ENCODE measurements at regions of chr6 and their contacts with region 1.

Region 1: GRCh38 chr6:159693128-159693893 is at the start of gene SOD2:
- DNase-seq: peak; percentile 81
- H3K4me3 ChIP-seq: peak within 1 kb of the TSS; percentile 67 to 91 (median 82)
- H3K27ac ChIP-seq: peak within 1 kb of the TSS; percentile 58
- H3K4me1 ChIP-seq: peaks cover 25% of the 10 kb centered on the region
- H3K27me3 ChIP-seq: no peaks in the 10 kb centered on the region
- CTCF ChIP-seq: no peak
- total RNA-seq, gene SOD2: 105 to 145 TPM

Region 2: GRCh38 chr6:158344534-158344933 is 1348.8 kb before region 1 on chr6:
- CTCF ChIA-PET with region 1: no interaction called
- dilution Hi-C with region 1: no loop called
- in situ Hi-C with region 1: no loop called
- intact Hi-C with region 1: no loop called
- DNase-seq: no peak
- H3K4me3 ChIP-seq: no peak overlapping the region
- H3K27ac ChIP-seq: no peak overlapping the region
- H3K4me1 ChIP-seq: no peaks in the 10 kb centered on the region
- H3K27me3 ChIP-seq: no peaks in the 10 kb centered on the region
- CTCF ChIP-seq: no peak

Region 3: GRCh38 chr6:159505140-159505922 is 188.0 kb before region 1 on chr6:
- CTCF ChIA-PET with region 1: no interaction called
- dilution Hi-C with region 1: no loop called
- in situ Hi-C with region 1: no loop called
- intact Hi-C with region 1: no loop called
- DNase-seq: no peak
- H3K4me3 ChIP-seq: no peak overlapping the region
- H3K27ac ChIP-seq: no peak overlapping the region
- H3K4me1 ChIP-seq: no peaks in the 10 kb centered on the region
- H3K27me3 ChIP-seq: no peaks in the 10 kb centered on the region
- CTCF ChIP-seq: no peak

Region 4: DNA sequence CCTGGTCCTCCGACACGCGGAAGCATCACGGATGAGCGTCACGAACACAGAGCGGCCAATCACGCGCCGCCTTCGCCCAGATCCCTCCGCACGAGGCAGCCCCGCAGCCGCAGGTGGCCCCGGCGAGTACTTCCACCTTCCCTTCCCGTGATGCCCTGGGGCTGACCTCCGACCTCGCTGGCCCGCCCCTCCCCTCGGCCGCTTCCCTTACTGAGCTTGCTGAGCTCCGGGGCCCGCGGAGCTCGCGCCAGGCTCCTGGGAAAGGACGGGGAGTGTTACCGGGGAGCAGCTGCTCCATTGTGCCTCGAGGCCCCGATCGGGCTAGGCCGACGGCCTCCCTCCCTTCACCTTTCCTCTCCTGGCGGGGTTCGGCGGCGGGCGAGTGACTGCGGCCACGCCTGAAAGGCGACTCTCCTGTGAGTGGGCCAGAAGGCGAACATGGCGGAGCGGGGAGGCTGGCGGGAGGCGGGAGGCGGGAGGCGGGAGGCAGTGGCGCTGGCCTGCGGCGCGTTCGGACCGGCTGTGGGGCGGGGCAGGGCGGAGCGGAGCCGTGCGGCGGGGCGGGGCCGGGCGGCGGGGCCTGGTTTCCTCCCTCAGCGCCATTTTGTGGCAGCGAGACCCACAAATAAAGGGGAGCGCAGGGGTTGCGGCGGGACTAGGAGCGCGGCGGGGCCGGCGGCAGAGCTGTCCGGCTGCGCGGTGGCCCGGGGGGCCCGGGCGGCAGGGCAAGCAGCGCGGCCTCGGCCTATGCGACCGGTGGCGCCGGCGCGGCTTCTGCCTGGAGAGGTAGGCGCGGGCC is 33.8 kb after region 1 on chr6 and contains the start of gene WTAP:
- CTCF ChIA-PET with region 1: interaction called, 3 read pairs
- dilution Hi-C with region 1: no loop called
- in situ Hi-C with region 1: loop called in 1 of 2 experiments (anchors 5 kb)
- intact Hi-C with region 1: loop called (anchors 1 kb)
- DNase-seq: peak; percentile 97
- H3K4me3 ChIP-seq: peak within 1 kb of the TSS; percentile 84 to 92 (median 91)
- H3K27ac ChIP-seq: peak within 1 kb of the TSS; percentile 89
- H3K4me1 ChIP-seq: peaks cover 16% of the 10 kb centered on the region
- H3K27me3 ChIP-seq: no peaks in the 10 kb centered on the region
- CTCF ChIP-seq: no peak
- total RNA-seq, gene WTAP: 64.5 to 92.0 TPM

Region 5: DNA sequence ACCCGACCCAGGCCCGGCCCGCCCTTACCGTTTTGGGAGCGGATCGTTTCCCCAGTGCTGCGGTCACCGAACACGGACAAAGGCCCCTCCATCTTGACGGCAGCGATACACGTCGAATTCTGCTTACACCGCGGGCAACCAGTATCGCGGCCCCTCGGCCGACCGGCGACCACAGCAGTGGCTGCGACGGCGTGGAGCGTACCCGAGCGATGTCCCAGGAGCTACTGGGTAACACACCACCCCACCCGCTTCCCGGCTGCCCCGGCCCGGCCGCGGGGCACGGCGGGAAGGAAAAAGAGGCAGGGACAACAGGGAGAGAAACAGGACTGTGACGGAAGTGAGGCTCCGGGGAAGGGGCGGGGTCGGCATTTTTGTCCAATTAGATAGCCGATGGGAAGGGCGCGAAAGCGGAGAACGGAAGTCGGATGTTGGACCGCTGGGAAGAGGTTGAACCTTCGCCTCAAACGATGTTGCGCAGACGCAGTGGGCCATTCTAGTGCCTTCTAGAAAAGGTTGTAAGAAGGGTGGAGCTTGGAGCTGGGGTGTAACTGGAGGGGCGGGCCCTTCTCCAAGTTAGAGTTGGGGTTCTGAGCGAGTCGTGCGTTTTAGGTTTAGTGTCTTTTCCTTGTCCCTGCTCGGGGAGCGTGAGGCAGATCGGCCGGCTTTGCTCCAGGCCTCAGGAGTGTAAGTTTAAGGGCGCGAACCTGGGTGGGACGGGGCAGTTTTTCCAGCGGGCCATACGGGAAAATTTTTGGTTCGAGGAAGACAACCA is 96.3 kb after region 1 on chr6 and contains the start of gene TCP1:
- CTCF ChIA-PET with region 1: no interaction called
- dilution Hi-C with region 1: no loop called
- in situ Hi-C with region 1: no loop called
- intact Hi-C with region 1: loop called (anchors 1 kb)
- DNase-seq: peak; percentile 99
- H3K4me3 ChIP-seq: peak within 1 kb of the TSS; percentile 94 to 98 (median 97)
- H3K27ac ChIP-seq: peak within 1 kb of the TSS; percentile 87
- H3K4me1 ChIP-seq: peaks cover 13% of the 10 kb centered on the region
- H3K27me3 ChIP-seq: no peaks in the 10 kb centered on the region
- CTCF ChIP-seq: no peak
- total RNA-seq, gene TCP1: 186 to 243 TPM

Region 6: GRCh38 chr6:159941286-159942113 is 248.2 kb after region 1 on chr6:
- CTCF ChIA-PET with region 1: no interaction called
- dilution Hi-C with region 1: no loop called
- in situ Hi-C with region 1: loop called in 1 of 2 experiments (anchors 25 kb)
- intact Hi-C with region 1: loop called (anchors 1 kb)
- DNase-seq: peak; percentile 51
- H3K4me3 ChIP-seq: no peak overlapping the region
- H3K27ac ChIP-seq: no peak overlapping the region
- H3K4me1 ChIP-seq: no peaks in the 10 kb centered on the region
- H3K27me3 ChIP-seq: no peaks in the 10 kb centered on the region
- CTCF ChIP-seq: peak; percentile 35 to 66

Region 7: GRCh38 chr6:160455541-160456213 is 762.4 kb after region 1 on chr6:
- CTCF ChIA-PET with region 1: no interaction called
- dilution Hi-C with region 1: no loop called
- in situ Hi-C with region 1: no loop called
- intact Hi-C with region 1: loop called (anchors 5 kb)
- DNase-seq: peak; percentile 28
- H3K4me3 ChIP-seq: peak overlapping the region in 1 of 3 experiments; percentile 20
- H3K27ac ChIP-seq: no peak overlapping the region
- H3K4me1 ChIP-seq: peaks cover 4% of the 10 kb centered on the region
- H3K27me3 ChIP-seq: no peaks in the 10 kb centered on the region
- CTCF ChIP-seq: peak; percentile 83 to 95

Measured in mammary epithelial cell (primary cell).